ENCODE measurements at regions of chr14 and their contacts with region 1.

Region 1: GRCh38 chr14:103500148-103500990 is 22.3 kb downstream of the CKB start:
- DNase-seq: peak; percentile 50 to 92
- H3K4me3 ChIP-seq: no peak overlapping the region
- H3K27ac ChIP-seq: no peak overlapping the region
- H3K4me1 ChIP-seq: no peaks in the 10 kb centered on the region
- H3K27me3 ChIP-seq: no peaks in the 10 kb centered on the region; a peak in 1 of 7 replicates
- CTCF ChIP-seq: peak; percentile 89 to 95 (median 92)
- EP300 ChIP-seq: no peak
- POLR2A ChIP-seq: no peak
- RAD21 ChIP-seq: peak; percentile 75 to 81

Region 2: GRCh38 chr14:103488960-103489359 is 11.4 kb before region 1 on chr14:
- CTCF ChIA-PET with region 1: interaction called, 16 read pairs
- POLR2A ChIA-PET with region 1: interaction called, 3 read pairs
- DNase-seq: no peak
- H3K4me3 ChIP-seq: no peak overlapping the region
- H3K27ac ChIP-seq: no peak overlapping the region
- H3K4me1 ChIP-seq: no peaks in the 10 kb centered on the region
- H3K27me3 ChIP-seq: no peaks in the 10 kb centered on the region
- CTCF ChIP-seq: no peak
- EP300 ChIP-seq: no peak
- POLR2A ChIP-seq: no peak
- RAD21 ChIP-seq: no peak

Region 3: GRCh38 chr14:103512701-103513611 is 12.6 kb after region 1 on chr14:
- CTCF ChIA-PET with region 1: interaction called, 70 read pairs
- POLR2A ChIA-PET with region 1: interaction called, 29 read pairs
- DNase-seq: no peak
- H3K4me3 ChIP-seq: no peak overlapping the region
- H3K27ac ChIP-seq: no peak overlapping the region
- H3K4me1 ChIP-seq: peaks cover 0 to 3% (median 2%) of the 10 kb centered on the region in 4 experiments; a peak in 3 of 7 replicates
- H3K27me3 ChIP-seq: no peaks in the 10 kb centered on the region
- CTCF ChIP-seq: peak in 1 of 3 experiments; percentile 3; a peak in 1 of 4 replicates
- EP300 ChIP-seq: no peak
- POLR2A ChIP-seq: no peak; a peak in 1 of 3 replicates
- RAD21 ChIP-seq: peak; percentile 3 to 7; a peak in 1 of 4 replicates

Region 4: GRCh38 chr14:103520657-103521437 is 20.5 kb after region 1 on chr14:
- CTCF ChIA-PET with region 1: interaction called, 70 read pairs
- POLR2A ChIA-PET with region 1: interaction called, 29 read pairs
- DNase-seq: peak in 1 of 2 experiments; percentile 86
- H3K4me3 ChIP-seq: peak overlapping the region; percentile 47 to 96 (median 84)
- H3K27ac ChIP-seq: no peak overlapping the region
- H3K4me1 ChIP-seq: peaks cover 0 to 28% (median 19%) of the 10 kb centered on the region in 4 experiments; a peak in 6 of 7 replicates
- H3K27me3 ChIP-seq: peaks cover 3 to 18% (median 13%) of the 10 kb centered on the region in 4 experiments
- CTCF ChIP-seq: peak in 2 of 3 experiments; percentile 61 to 66; a peak in 3 of 4 replicates
- EP300 ChIP-seq: no peak
- POLR2A ChIP-seq: peak in 1 of 2 experiments; percentile 59; a peak in 1 of 3 replicates
- RAD21 ChIP-seq: peak; percentile 23 to 47; a peak in 3 of 4 replicates

Region 5: DNA sequence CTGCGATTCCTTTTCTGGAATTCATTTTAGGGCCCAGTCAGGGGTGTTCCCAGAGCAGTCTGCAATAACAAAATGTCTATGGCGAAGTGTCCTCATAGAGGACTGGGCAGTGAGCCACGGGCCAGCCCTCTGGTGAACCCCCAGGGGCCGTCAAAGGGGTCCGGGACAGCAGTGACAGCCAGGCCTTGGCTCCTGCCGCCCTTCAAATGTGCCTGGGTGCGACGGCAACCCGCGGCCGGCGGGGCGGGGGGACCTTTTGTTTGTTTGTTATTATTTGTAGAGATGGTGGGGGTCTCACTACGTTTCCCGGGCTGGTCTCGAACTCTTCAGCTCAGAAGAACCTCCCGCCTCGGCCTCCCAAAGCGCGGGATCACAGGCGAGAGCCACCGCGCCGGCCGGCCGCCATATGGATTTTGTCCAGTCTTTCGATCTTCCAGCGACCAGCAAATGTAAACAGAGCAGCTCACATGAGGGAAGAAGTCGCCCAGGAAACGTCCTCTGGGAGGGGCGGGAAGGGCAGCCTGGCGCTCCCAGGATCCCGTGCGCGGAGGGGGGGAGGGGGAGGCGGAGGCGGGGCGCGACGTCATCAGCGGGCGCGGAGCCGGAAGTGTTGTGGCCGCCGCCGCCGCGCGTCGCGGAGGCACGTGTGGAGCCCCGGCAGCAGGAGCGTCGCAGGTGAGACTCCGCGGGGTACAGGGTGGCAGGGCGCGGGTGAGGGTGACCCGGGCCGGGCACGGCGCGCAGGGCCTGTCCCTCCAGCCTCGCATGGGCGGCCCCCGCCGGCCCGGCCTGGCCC is 28.4 kb after region 1 on chr14 and contains the start of gene TRMT61A:
- CTCF ChIA-PET with region 1: interaction called, 921 read pairs
- POLR2A ChIA-PET with region 1: no interaction called
- DNase-seq: peak in 1 of 2 experiments; percentile 83
- H3K4me3 ChIP-seq: peak within 1 kb of the TSS; percentile 61 to 97 (median 94)
- H3K27ac ChIP-seq: peak within 1 kb of the TSS; percentile 71; the same call in 1 of the 2 replicates
- H3K4me1 ChIP-seq: peaks cover 0 to 12% (median 10%) of the 10 kb centered on the region in 4 experiments; a peak in 6 of 7 replicates
- H3K27me3 ChIP-seq: peaks cover 2 to 16% (median 7%) of the 10 kb centered on the region in 4 experiments
- CTCF ChIP-seq: no peak
- EP300 ChIP-seq: no peak
- POLR2A ChIP-seq: peak in 1 of 2 experiments; percentile 59; a peak in 1 of 3 replicates
- RAD21 ChIP-seq: no peak
- total RNA-seq, gene TRMT61A: 15.1 and 15.8 TPM in 2 replicates

Measured in H1 (cell line).